ACHN (cell line): ENCODE measurements at regions of chr2 and their contacts with region 1.

Region 1: GRCh38 chr2:105235388-105236054 is 6.0 kb upstream of the GPR45 start:
- DNase-seq: peak; percentile 92

Region 2: GRCh38 chr2:105114551-105114950 is 121.0 kb before region 1 on chr2:
- in situ Hi-C with region 1: loop called (anchors 25 kb)
- DNase-seq: peak; percentile 62